ENCODE measurements at regions of chr5 and their contacts with region 1.

Region 1: GRCh38 chr5:128844354-128844923 is 120.8 kb upstream of the SLC27A6 start:
- DNase-seq: no peak
- H3K4me3 Mint-ChIP-seq: no peak overlapping the region
- H3K27ac Mint-ChIP-seq: no peak overlapping the region
- H3K4me1 Mint-ChIP-seq: no peaks in the 10 kb centered on the region
- H3K27me3 Mint-ChIP-seq: no peaks in the 10 kb centered on the region
- CTCF ChIP-seq: no peak

Region 2: DNA sequence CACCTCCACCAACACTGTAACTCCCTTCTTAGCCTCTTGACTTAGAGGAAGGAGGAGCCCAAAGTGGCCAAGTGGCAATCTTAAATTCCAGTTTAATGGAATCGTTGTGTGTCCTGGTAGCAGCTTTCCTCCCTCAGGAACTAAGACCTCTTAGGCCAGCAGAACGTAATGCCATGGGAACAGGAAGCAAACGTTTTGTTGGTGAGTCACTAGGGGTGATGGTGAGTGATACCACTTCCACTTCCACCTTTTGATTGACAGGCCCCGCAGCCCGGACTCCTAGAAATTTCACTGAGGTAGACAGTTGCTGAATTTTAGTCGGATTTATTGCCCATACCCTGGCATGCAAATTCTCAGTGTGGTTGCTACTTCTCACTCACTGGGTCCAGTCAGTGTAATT is 212.2 kb before region 1 on chr5:
- CTCF ChIA-PET with region 1: no interaction called
- intact Hi-C with region 1: no loop called
- DNase-seq: no peak
- H3K4me3 Mint-ChIP-seq: no peak overlapping the region
- H3K27ac Mint-ChIP-seq: no peak overlapping the region
- H3K4me1 Mint-ChIP-seq: no peaks in the 10 kb centered on the region
- H3K27me3 Mint-ChIP-seq: no peaks in the 10 kb centered on the region
- CTCF ChIP-seq: no peak

Region 3: GRCh38 chr5:128667152-128667551 is 177.3 kb before region 1 on chr5:
- CTCF ChIA-PET with region 1: interaction called, 5 read pairs
- intact Hi-C with region 1: loop called (anchors 1 kb)
- DNase-seq: no peak
- H3K4me3 Mint-ChIP-seq: no peak overlapping the region
- H3K27ac Mint-ChIP-seq: no peak overlapping the region
- H3K4me1 Mint-ChIP-seq: peaks cover 13% of the 10 kb centered on the region
- H3K27me3 Mint-ChIP-seq: no peaks in the 10 kb centered on the region
- CTCF ChIP-seq: no peak

Measured in Calu3 (cell line).